ENCODE measurements at regions of chr2 and their contacts with region 1.

Region 1: DNA sequence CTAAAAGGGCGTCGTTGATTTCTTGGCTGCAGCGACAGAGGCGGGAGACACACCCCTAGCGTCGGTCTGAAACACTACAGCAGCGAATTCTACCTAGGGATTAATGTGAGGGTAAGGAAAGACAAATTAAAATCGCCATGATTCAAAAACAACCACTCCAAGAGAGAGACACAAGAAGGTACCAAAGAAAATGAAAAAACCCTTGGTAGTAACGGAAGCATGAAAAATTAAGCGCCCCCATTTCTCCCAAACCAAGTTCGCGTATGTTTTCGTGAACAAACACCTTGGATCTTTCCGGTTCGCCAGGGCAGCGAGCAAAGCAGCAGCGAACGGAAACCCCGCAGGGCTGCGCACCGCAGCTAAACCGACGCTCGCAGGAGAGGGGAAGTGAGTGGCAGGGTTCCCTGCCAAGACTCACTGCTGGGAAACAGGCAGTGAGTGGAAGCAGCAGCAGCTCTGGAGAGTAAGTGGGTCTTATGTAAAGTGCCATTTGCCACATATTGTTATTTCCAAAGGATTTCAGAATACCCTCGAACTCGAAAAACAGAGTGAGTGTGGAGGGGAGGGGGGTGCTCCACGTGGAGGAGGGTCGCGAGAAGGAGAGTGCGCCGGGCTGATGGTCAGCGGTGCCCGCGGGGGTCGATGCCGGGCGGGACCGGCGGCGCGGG is 1.0 kb downstream of the PPP3R1 start:
- DNase-seq: peak in 1 of 2 donors; percentile 80
- H3K4me3 ChIP-seq: peak overlapping the region; percentile 91 to 99
- H3K27ac ChIP-seq: peak overlapping the region; percentile 97 to 100
- H3K4me1 ChIP-seq: peaks cover 3 to 44% of the 10 kb centered on the region in 2 donors
- H3K27me3 ChIP-seq: no peaks in the 10 kb centered on the region
- CTCF ChIP-seq: peak; percentile 32 to 76 (median 66)

Region 2: DNA sequence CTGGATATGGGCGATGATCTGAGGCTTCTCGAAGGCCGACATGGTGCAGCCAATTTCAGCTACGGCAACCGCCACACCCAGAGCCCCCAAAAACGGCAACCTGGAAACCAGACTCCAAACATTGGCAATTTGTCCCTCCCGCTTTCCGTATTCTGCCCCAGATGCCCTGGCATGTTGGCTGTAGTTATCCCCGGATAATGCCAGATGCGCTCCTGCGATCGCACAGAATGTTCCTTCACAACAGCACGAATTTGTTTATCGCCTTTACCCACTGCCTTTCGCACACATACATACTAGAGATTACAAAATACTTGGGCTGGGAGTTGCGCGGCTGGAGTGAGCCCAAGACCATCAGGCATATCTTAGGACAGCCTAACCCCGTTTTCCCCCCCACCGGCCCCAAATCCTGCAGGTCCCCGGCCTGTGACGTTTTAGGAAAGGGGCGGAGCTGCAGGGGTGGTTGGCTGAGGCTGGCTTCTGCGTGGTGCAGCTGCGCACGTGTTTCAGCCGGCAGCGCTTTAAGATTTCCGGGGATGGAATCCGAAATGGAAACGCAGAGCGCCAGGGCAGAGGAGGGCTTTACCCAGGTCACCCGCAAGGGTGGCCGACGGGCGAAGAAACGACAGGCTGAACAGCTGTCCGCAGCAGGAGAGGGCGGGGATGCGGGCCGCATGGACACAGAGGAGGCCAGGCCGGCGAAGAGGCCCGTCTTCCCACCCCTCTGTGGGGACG is 93.8 kb before region 1 on chr2 and contains the start of gene PNO1:
- intact Hi-C with region 1: loop called (anchors 1 kb)
- DNase-seq: peak; percentile 78 to 97
- H3K4me3 ChIP-seq: peak within 1 kb of the TSS; percentile 72 to 91
- H3K27ac ChIP-seq: peak within 1 kb of the TSS; percentile 82 to 83
- H3K4me1 ChIP-seq: peaks cover 4 to 17% of the 10 kb centered on the region in 2 donors
- H3K27me3 ChIP-seq: no peaks in the 10 kb centered on the region
- CTCF ChIP-seq: no peak
- total RNA-seq, gene PNO1: 5.4 TPM

Region 3: DNA sequence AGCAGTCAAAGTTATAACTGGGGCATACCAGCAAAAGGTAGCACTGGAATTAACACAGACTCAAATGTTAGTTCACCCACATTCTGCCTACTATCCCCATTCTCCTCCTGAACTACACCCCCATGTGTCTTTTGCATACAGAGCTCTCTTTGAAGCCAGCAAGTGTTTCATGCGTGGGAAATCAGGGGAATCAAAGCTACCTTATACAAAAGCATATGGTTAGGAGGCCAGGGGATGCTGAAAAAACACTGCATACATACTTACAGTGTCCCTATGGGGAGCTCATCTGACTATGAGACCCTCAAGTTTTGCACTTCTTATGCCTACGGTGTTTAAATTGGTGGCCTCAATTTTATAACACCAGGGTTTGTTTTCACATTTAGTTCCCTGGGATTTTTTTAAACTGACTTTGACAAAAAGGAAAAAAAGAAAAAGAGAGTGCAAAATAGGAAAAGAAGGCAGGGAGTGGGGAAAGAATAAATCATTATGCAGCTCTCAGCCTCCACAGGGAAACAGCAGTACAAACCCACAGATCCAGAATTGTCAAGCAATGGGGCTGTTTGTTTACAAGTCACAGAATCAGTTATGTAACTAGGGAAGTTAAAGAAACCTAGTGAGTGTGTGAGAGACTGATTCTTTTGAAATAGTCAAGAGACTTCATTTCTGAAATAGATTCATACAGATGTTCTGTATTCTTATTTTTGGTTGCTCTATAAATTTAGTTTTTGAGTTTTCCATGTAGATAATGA is 21.1 kb after region 1 on chr2:
- intact Hi-C with region 1: no loop called
- DNase-seq: no peak
- H3K4me3 ChIP-seq: no peak overlapping the region
- H3K27ac ChIP-seq: no peak overlapping the region
- H3K4me1 ChIP-seq: no peaks in the 10 kb centered on the region
- H3K27me3 ChIP-seq: no peaks in the 10 kb centered on the region
- CTCF ChIP-seq: no peak

Region 4: DNA sequence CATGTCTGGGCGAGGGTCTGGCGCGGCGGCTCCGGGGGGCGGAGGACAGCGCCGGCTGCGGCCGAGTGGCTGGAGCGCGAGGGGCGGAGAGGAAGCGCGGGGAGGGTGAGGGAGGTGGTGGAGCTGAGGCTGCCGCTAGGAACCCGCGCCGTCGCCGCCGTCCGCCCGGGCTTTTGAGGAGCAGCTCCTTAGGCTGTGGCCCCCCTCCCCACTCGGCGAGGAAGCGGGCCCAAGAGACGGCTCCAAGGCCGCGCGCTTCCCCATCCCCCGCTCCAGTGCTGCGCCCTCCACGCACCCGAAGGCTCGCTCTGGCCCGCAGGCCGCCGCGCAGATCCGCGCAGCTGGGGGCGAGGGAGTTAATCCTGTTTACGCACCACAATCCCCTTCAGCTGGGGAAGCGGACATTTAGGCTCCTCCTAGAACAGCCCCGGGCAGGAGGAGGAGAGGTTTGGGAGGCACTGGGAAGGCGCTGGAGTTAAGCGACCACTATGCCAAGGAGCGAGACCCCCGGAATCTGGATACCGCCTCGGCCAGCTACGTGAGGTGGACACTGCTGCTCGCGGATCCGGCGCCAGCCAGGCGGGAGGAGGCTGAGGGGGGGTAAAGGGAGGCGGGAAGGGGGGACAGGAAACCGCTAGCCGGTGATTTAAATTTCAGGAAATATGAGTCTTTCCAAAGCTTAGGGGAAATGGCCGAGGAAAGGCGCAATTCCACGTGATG is 68.2 kb after region 1 on chr2 and contains the start of gene CNRIP1:
- intact Hi-C with region 1: loop called (anchors 2 kb)
- DNase-seq: peak in 1 of 2 donors; percentile 83
- H3K4me3 ChIP-seq: peak within 1 kb of the TSS; percentile 68 to 90
- H3K27ac ChIP-seq: peak within 1 kb of the TSS; percentile 94 to 95
- H3K4me1 ChIP-seq: peaks cover 0 to 7% of the 10 kb centered on the region in 2 donors
- H3K27me3 ChIP-seq: no peaks in the 10 kb centered on the region
- CTCF ChIP-seq: no peak
- total RNA-seq, gene CNRIP1: 37.7 TPM

Region 5: GRCh38 chr2:68832233-68832869 is 581.0 kb after region 1 on chr2:
- intact Hi-C with region 1: loop called (anchors 10 kb)
- DNase-seq: peak; percentile 70 to 94
- H3K4me3 ChIP-seq: no peak overlapping the region
- H3K27ac ChIP-seq: peak overlapping the region; percentile 95 to 97
- H3K4me1 ChIP-seq: peaks cover 28 to 45% of the 10 kb centered on the region in 2 donors
- H3K27me3 ChIP-seq: no peaks in the 10 kb centered on the region
- CTCF ChIP-seq: no peak

Region 6: DNA sequence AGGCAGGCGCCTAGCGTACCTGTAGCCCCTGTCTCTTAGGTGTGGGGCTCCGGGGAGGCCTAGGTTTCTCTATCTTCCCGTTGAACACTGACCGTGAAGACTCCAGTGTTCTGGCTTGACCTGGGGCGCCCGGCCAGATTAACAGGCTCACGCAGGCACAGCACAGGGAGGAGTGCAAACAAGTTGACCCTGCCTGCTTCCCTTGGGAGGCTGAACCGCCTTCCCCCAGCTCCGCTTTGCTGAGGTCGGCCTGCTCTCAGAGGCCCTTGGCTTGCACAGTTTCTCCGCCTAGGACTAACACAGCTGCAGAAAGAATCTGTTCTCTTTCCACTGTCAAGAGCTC is 2007.2 kb after region 1 on chr2:
- intact Hi-C with region 1: loop called (anchors 10 kb)
- DNase-seq: peak in 1 of 2 donors; percentile 78
- H3K4me3 ChIP-seq: peak overlapping the region; percentile 93 to 97
- H3K27ac ChIP-seq: peak overlapping the region; percentile 88 to 91
- H3K4me1 ChIP-seq: peaks cover 4 to 17% of the 10 kb centered on the region in 2 donors
- H3K27me3 ChIP-seq: no peaks in the 10 kb centered on the region
- CTCF ChIP-seq: no peak

Measured in ascending aorta (tissue), 2 donors.